ENCODE measurements at regions of chr4 and their contacts with region 1.

Region 1: GRCh38 chr4:102288497-102288896 is 56.8 kb downstream of the SLC39A8 start:
- DNase-seq: no peak
- H3K4me3 ChIP-seq: no peak overlapping the region
- H3K27ac ChIP-seq: no peak overlapping the region
- H3K4me1 ChIP-seq: no peaks in the 10 kb centered on the region
- H3K27me3 ChIP-seq: no peaks in the 10 kb centered on the region
- CTCF ChIP-seq: no peak
- POLR2A ChIP-seq: no peak

Region 2: GRCh38 chr4:102104278-102104677 is 184.2 kb before region 1 on chr4:
- intact Hi-C with region 1: no loop called
- DNase-seq: no peak
- H3K4me3 ChIP-seq: no peak overlapping the region
- H3K27ac ChIP-seq: no peak overlapping the region
- H3K4me1 ChIP-seq: no peaks in the 10 kb centered on the region
- H3K27me3 ChIP-seq: no peaks in the 10 kb centered on the region
- CTCF ChIP-seq: no peak
- POLR2A ChIP-seq: no peak

Region 3: GRCh38 chr4:102234243-102234838 is 54.2 kb before region 1 on chr4:
- intact Hi-C with region 1: no loop called
- DNase-seq: no peak
- H3K4me3 ChIP-seq: no peak overlapping the region
- H3K27ac ChIP-seq: no peak overlapping the region
- H3K4me1 ChIP-seq: no peaks in the 10 kb centered on the region
- H3K27me3 ChIP-seq: no peaks in the 10 kb centered on the region
- CTCF ChIP-seq: no peak
- POLR2A ChIP-seq: no peak

Region 4: GRCh38 chr4:102308031-102308799 is 19.7 kb after region 1 on chr4:
- intact Hi-C with region 1: loop called (anchors 2 kb)
- DNase-seq: no peak
- H3K4me3 ChIP-seq: no peak overlapping the region
- H3K27ac ChIP-seq: no peak overlapping the region
- H3K4me1 ChIP-seq: no peaks in the 10 kb centered on the region
- H3K27me3 ChIP-seq: no peaks in the 10 kb centered on the region
- CTCF ChIP-seq: no peak
- POLR2A ChIP-seq: no peak

Measured in breast epithelium (tissue), 4 donors.